Activated B cell treated with CpG ODN at 0.5 μM for 24 hours (primary cell): ENCODE measurements at regions of chr9 and their contacts with region 1.

Region 1: GRCh38 chr9:94213511-94214124 is 45.5 kb upstream of the ZNF169 start:
- DNase-seq: peak; percentile 44
- ATAC-seq: peak; percentile 96
- H3K4me3 Mint-ChIP-seq: peak overlapping the region; percentile 16
- H3K27ac Mint-ChIP-seq: no peak overlapping the region
- H3K4me1 Mint-ChIP-seq: peaks cover 4% of the 10 kb centered on the region
- H3K27me3 Mint-ChIP-seq: peaks cover 15% of the 10 kb centered on the region
- CTCF ChIP-seq: no peak

Region 2: DNA sequence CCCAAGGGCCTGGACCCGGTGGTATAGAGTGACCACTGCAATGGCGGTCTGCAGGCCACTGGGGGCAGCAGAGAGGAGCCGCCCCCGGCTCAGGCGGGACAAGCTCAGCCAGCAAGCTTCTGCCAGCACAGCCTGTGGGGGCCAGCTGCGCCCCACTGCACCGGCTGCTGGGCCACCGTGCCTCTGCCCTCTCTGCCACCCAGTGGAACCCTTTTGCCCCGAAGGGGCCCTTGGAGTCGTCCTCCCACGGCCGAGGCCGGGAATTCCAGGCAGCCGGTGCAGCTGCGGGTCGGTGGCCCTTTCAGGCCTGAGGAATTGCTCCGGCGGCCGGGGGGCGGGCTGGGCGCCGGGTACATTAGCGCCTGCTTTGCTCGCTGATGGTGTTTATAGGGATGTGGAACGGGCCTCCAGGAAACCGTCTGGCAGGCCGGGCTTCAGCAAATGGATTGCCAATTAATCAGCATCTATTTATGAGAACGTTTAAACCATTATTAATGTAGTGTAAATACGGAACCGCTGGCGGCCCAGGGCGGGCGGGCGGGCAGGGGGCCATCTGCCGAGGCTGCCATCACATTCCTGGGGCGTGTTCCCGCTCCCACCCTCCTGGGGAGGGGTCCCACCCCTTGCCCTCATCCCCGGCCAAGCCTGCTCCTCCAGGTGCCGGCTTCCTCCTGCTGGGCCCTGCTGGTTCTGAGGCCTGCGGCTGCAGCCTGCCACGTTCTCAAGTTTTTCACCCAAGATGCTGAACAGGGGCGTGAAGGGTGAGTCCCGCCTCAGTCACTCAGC is 385.9 kb before region 1 on chr9:
- CTCF ChIA-PET with region 1: no interaction called
- POLR2A ChIA-PET with region 1: no interaction called
- intact Hi-C with region 1: loop called (anchors 10 kb)
- DNase-seq: no peak
- ATAC-seq: peak; percentile 49
- H3K4me3 Mint-ChIP-seq: no peak overlapping the region
- H3K27ac Mint-ChIP-seq: no peak overlapping the region
- H3K4me1 Mint-ChIP-seq: peaks cover 10% of the 10 kb centered on the region
- H3K27me3 Mint-ChIP-seq: peaks cover 41% of the 10 kb centered on the region
- CTCF ChIP-seq: no peak

Region 3: GRCh38 chr9:94014065-94014654 is 199.5 kb before region 1 on chr9:
- CTCF ChIA-PET with region 1: interaction called, 77 read pairs
- POLR2A ChIA-PET with region 1: no interaction called
- intact Hi-C with region 1: loop called (anchors 1 kb)
- DNase-seq: no peak
- ATAC-seq: no peak
- H3K4me3 Mint-ChIP-seq: no peak overlapping the region
- H3K27ac Mint-ChIP-seq: no peak overlapping the region
- H3K4me1 Mint-ChIP-seq: peaks cover 3% of the 10 kb centered on the region
- H3K27me3 Mint-ChIP-seq: no peaks in the 10 kb centered on the region
- CTCF ChIP-seq: no peak

Region 4: GRCh38 chr9:94065535-94065961 is 148.1 kb before region 1 on chr9:
- CTCF ChIA-PET with region 1: interaction called, 259 read pairs
- POLR2A ChIA-PET with region 1: interaction called, 5 read pairs
- intact Hi-C with region 1: loop called (anchors 1 kb)
- DNase-seq: peak; percentile 27
- ATAC-seq: peak; percentile 54
- H3K4me3 Mint-ChIP-seq: no peak overlapping the region
- H3K27ac Mint-ChIP-seq: no peak overlapping the region
- H3K4me1 Mint-ChIP-seq: peaks cover 5% of the 10 kb centered on the region
- H3K27me3 Mint-ChIP-seq: no peaks in the 10 kb centered on the region
- CTCF ChIP-seq: no peak

Region 5: GRCh38 chr9:94178927-94179326 is 34.7 kb before region 1 on chr9:
- CTCF ChIA-PET with region 1: interaction called, 7 read pairs
- POLR2A ChIA-PET with region 1: no interaction called
- intact Hi-C with region 1: loop called (anchors 5 kb)
- DNase-seq: no peak
- ATAC-seq: no peak
- H3K4me3 Mint-ChIP-seq: no peak overlapping the region
- H3K27ac Mint-ChIP-seq: no peak overlapping the region
- H3K4me1 Mint-ChIP-seq: peaks cover 69% of the 10 kb centered on the region
- H3K27me3 Mint-ChIP-seq: no peaks in the 10 kb centered on the region
- CTCF ChIP-seq: no peak

Region 6: DNA sequence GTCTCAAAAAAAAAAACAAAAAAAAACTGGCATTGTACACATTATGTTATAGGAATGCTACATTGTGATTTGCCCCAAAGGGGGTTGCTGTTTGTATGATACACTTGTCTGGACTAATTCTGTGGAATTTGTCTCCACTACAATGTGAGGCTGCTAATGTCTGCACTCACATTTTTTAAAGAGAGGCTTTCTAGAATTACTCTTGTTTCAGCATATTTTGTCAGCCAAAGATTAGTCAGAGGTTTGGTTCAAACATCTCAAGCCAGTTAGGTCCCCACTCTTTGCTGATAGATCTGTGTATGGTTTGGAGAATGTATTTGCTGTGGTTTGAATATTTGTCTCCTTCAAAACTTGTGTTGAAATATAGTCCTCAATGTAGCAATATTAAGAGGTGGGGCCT is 13.8 kb before region 1 on chr9:
- CTCF ChIA-PET with region 1: no interaction called
- POLR2A ChIA-PET with region 1: interaction called, 12 read pairs
- intact Hi-C with region 1: no loop called
- DNase-seq: no peak
- ATAC-seq: no peak
- H3K4me3 Mint-ChIP-seq: no peak overlapping the region
- H3K27ac Mint-ChIP-seq: no peak overlapping the region
- H3K4me1 Mint-ChIP-seq: peaks cover 3% of the 10 kb centered on the region
- H3K27me3 Mint-ChIP-seq: no peaks in the 10 kb centered on the region
- CTCF ChIP-seq: no peak

Region 7: GRCh38 chr9:94743035-94743954 is 529.7 kb after region 1 on chr9:
- CTCF ChIA-PET with region 1: no interaction called
- POLR2A ChIA-PET with region 1: no interaction called
- intact Hi-C with region 1: no loop called
- DNase-seq: no peak
- ATAC-seq: no peak
- H3K4me3 Mint-ChIP-seq: no peak overlapping the region
- H3K27ac Mint-ChIP-seq: no peak overlapping the region
- H3K4me1 Mint-ChIP-seq: peaks cover 8% of the 10 kb centered on the region
- H3K27me3 Mint-ChIP-seq: no peaks in the 10 kb centered on the region
- CTCF ChIP-seq: no peak